ENCODE measurements at regions of chr7 and their contacts with region 1.

Region 1: GRCh38 chr7:63925623-63926460 is 72.8 kb upstream of the ZNF722 start:
- DNase-seq: peak; percentile 69 to 98 (median 95)
- ATAC-seq: peak; percentile 98
- H3K4me3 ChIP-seq: peak overlapping the region; percentile 64
- H3K4me3 Mint-ChIP-seq: peak overlapping the region; percentile 88 to 100 (median 98)
- H3K27ac ChIP-seq: peak overlapping the region; percentile 82
- H3K27ac Mint-ChIP-seq: peak overlapping the region; percentile 87 to 98 (median 95)
- H3K4me1 ChIP-seq: no peaks in the 10 kb centered on the region
- H3K4me1 Mint-ChIP-seq: peaks cover 0 to 24% (median 12%) of the 10 kb centered on the region in 7 donors
- H3K27me3 ChIP-seq: no peaks in the 10 kb centered on the region
- H3K27me3 Mint-ChIP-seq: peaks cover 0 to 4% (median 0%) of the 10 kb centered on the region in 5 donors

Region 2: DNA sequence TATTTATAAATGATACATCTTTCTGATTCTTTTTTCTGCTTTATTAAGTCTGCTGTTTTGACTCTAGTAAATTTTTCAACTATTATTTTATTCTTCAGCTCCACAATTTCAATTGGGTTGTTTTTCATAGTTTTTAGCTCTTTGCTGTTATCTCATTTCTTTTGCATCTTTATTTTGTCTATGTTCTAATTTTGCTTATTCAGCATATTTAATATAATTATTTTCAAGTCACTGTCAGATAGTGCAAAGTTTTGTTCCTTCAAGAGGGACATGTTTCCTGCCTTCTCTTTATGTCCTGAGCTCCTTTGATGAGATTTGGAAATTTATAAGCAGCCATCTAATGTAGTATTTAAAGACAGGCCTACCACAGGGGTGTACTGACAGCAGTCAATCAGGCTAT is 58.7 kb before region 1 on chr7:
- CTCF ChIA-PET with region 1: no interaction called
- POLR2A ChIA-PET with region 1: no interaction called
- intact Hi-C with region 1: no loop called
- DNase-seq: no peak
- ATAC-seq: no peak
- H3K4me3 ChIP-seq: no peak overlapping the region
- H3K4me3 Mint-ChIP-seq: no peak overlapping the region
- H3K27ac ChIP-seq: no peak overlapping the region
- H3K27ac Mint-ChIP-seq: no peak overlapping the region
- H3K4me1 ChIP-seq: no peaks in the 10 kb centered on the region
- H3K4me1 Mint-ChIP-seq: no peaks in the 10 kb centered on the region
- H3K27me3 ChIP-seq: no peaks in the 10 kb centered on the region
- H3K27me3 Mint-ChIP-seq: no peaks in the 10 kb centered on the region

Region 3: DNA sequence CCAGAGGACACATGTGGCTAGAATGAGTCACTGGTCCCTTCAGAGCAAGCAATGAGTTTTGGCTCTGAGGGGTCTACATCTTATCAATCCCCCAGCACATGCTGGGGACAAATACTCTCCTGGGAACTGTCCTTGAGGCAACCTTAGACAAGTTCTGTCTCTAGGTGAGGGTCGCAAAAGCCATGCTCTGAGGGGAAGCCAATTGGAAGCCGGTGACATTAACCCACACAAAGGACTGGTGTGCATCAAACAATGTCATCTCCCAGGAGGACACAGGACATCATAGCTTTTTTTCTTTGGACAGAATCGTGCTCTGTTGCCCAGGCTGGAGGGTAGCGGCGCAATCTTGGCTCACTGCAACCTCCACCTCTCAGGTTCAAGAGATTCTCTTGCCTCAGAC is 38.8 kb before region 1 on chr7:
- CTCF ChIA-PET with region 1: no interaction called
- POLR2A ChIA-PET with region 1: no interaction called
- intact Hi-C with region 1: no loop called
- DNase-seq: no peak
- ATAC-seq: no peak
- H3K4me3 ChIP-seq: no peak overlapping the region
- H3K4me3 Mint-ChIP-seq: no peak overlapping the region
- H3K27ac ChIP-seq: no peak overlapping the region
- H3K27ac Mint-ChIP-seq: no peak overlapping the region
- H3K4me1 ChIP-seq: no peaks in the 10 kb centered on the region
- H3K4me1 Mint-ChIP-seq: no peaks in the 10 kb centered on the region
- H3K27me3 ChIP-seq: no peaks in the 10 kb centered on the region
- H3K27me3 Mint-ChIP-seq: peaks cover 0 to 5% (median under 1%) of the 10 kb centered on the region in 5 donors

Region 4: GRCh38 chr7:63900394-63901203 is 25.2 kb before region 1 on chr7:
- CTCF ChIA-PET with region 1: interaction called, 6 read pairs
- POLR2A ChIA-PET with region 1: interaction called, 21 read pairs
- intact Hi-C with region 1: loop called (anchors 1 kb)
- DNase-seq: peak; percentile 64 to 95 (median 91)
- ATAC-seq: peak; percentile 97
- H3K4me3 ChIP-seq: peak overlapping the region; percentile 84
- H3K4me3 Mint-ChIP-seq: peak overlapping the region; percentile 82 to 100 (median 98)
- H3K27ac ChIP-seq: peak overlapping the region; percentile 89
- H3K27ac Mint-ChIP-seq: peak overlapping the region; percentile 88 to 99 (median 95)
- H3K4me1 ChIP-seq: no peaks in the 10 kb centered on the region
- H3K4me1 Mint-ChIP-seq: peaks cover 0 to 22% (median 9%) of the 10 kb centered on the region in 7 donors
- H3K27me3 ChIP-seq: no peaks in the 10 kb centered on the region
- H3K27me3 Mint-ChIP-seq: peaks cover 0 to 4% (median 0%) of the 10 kb centered on the region in 5 donors

Region 5: GRCh38 chr7:64277630-64278029 is 351.8 kb after region 1 on chr7:
- CTCF ChIA-PET with region 1: no interaction called
- POLR2A ChIA-PET with region 1: no interaction called
- intact Hi-C with region 1: no loop called
- DNase-seq: no peak
- ATAC-seq: no peak
- H3K4me3 ChIP-seq: no peak overlapping the region
- H3K4me3 Mint-ChIP-seq: no peak overlapping the region
- H3K27ac ChIP-seq: no peak overlapping the region
- H3K27ac Mint-ChIP-seq: no peak overlapping the region
- H3K4me1 ChIP-seq: no peaks in the 10 kb centered on the region
- H3K4me1 Mint-ChIP-seq: no peaks in the 10 kb centered on the region
- H3K27me3 ChIP-seq: no peaks in the 10 kb centered on the region
- H3K27me3 Mint-ChIP-seq: no peaks in the 10 kb centered on the region

Region 6: GRCh38 chr7:64307254-64308015 is 381.6 kb after region 1 on chr7:
- CTCF ChIA-PET with region 1: interaction called, 3 read pairs
- POLR2A ChIA-PET with region 1: interaction called, 10 read pairs
- intact Hi-C with region 1: loop called (anchors 1 kb)
- DNase-seq: peak; percentile 76 to 95 (median 93)
- ATAC-seq: peak; percentile 99
- H3K4me3 ChIP-seq: peak overlapping the region; percentile 95
- H3K4me3 Mint-ChIP-seq: peak overlapping the region; percentile 90 to 100 (median 96)
- H3K27ac ChIP-seq: peak overlapping the region; percentile 83
- H3K27ac Mint-ChIP-seq: peak overlapping the region; percentile 94 to 99 (median 97)
- H3K4me1 ChIP-seq: peaks cover 0 to 13% of the 10 kb centered on the region in 2 donors
- H3K4me1 Mint-ChIP-seq: peaks cover 13 to 30% (median 19%) of the 10 kb centered on the region in 7 donors
- H3K27me3 ChIP-seq: no peaks in the 10 kb centered on the region
- H3K27me3 Mint-ChIP-seq: no peaks in the 10 kb centered on the region

Region 7: GRCh38 chr7:64313740-64314491 is 388.1 kb after region 1 on chr7 and contains the start of gene ZNF736:
- CTCF ChIA-PET with region 1: no interaction called
- POLR2A ChIA-PET with region 1: interaction called, 3 read pairs
- intact Hi-C with region 1: loop called (anchors 1 kb)
- DNase-seq: peak; percentile 64 to 92 (median 87)
- ATAC-seq: peak; percentile 100
- H3K4me3 ChIP-seq: peak within 1 kb of the TSS; percentile 81
- H3K4me3 Mint-ChIP-seq: peak within 1 kb of the TSS; percentile 90 to 100 (median 98)
- H3K27ac ChIP-seq: peak within 1 kb of the TSS; percentile 88
- H3K27ac Mint-ChIP-seq: peak within 1 kb of the TSS; percentile 88 to 100 (median 97)
- H3K4me1 ChIP-seq: peaks cover 8 to 12% of the 10 kb centered on the region in 2 donors
- H3K4me1 Mint-ChIP-seq: peaks cover 22 to 54% (median 39%) of the 10 kb centered on the region in 7 donors
- H3K27me3 ChIP-seq: no peaks in the 10 kb centered on the region
- H3K27me3 Mint-ChIP-seq: no peaks in the 10 kb centered on the region
- total RNA-seq, gene ZNF736: 22.8 to 54.2 (median 35.8) TPM

Region 8: DNA sequence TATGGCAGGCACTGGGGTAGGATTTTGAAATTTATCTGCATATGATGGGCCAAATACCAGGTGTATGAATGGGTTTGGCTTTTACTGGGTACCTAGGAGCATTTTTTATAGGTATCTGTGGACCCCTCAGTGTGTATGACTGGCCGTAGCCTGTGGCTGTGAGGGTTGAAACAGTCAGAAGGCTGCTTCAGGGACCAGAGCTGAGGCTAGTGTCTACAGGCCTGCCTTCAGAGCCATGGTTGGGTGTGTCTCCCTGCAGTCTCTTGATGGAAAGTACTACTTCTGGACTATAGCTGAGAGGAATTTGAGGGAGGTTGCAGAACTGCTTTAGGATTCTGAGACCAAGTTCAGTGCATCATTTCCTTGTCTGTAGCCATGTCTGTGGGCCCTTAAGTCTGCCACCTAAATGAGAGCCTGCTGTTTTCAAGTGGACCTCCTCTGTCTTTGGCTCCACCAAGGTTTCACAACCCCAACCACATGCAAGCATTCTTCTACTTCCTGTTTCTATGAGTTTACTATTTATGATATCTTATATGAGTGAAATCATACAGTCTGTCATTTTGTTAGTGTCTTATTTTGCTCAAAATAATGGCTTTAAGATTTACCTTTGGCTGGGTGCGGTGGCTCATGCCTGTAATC is 848.5 kb after region 1 on chr7:
- CTCF ChIA-PET with region 1: no interaction called
- POLR2A ChIA-PET with region 1: no interaction called
- intact Hi-C with region 1: no loop called
- DNase-seq: no peak
- ATAC-seq: peak; percentile 47
- H3K4me3 ChIP-seq: no peak overlapping the region
- H3K4me3 Mint-ChIP-seq: no peak overlapping the region
- H3K27ac ChIP-seq: no peak overlapping the region
- H3K27ac Mint-ChIP-seq: no peak overlapping the region
- H3K4me1 ChIP-seq: no peaks in the 10 kb centered on the region
- H3K4me1 Mint-ChIP-seq: no peaks in the 10 kb centered on the region
- H3K27me3 ChIP-seq: no peaks in the 10 kb centered on the region
- H3K27me3 Mint-ChIP-seq: peaks cover 0 to 5% (median 3%) of the 10 kb centered on the region in 5 donors

Region 9: GRCh38 chr7:65006094-65006992 is 1080.5 kb after region 1 on chr7 and contains the start of gene ERV3-1:
- CTCF ChIA-PET with region 1: no interaction called
- POLR2A ChIA-PET with region 1: interaction called, 9 read pairs
- intact Hi-C with region 1: loop called in 1 of 2 experiments (anchors 1 kb)
- DNase-seq: peak; percentile 76 to 96 (median 93)
- ATAC-seq: peak; percentile 99
- H3K4me3 ChIP-seq: peak within 1 kb of the TSS; percentile 72
- H3K4me3 Mint-ChIP-seq: peak within 1 kb of the TSS; percentile 75 to 96 (median 94)
- H3K27ac ChIP-seq: peak within 1 kb of the TSS; percentile 81
- H3K27ac Mint-ChIP-seq: peak within 1 kb of the TSS; percentile 73 to 98 (median 94)
- H3K4me1 ChIP-seq: peaks cover 4 to 21% of the 10 kb centered on the region in 2 donors
- H3K4me1 Mint-ChIP-seq: peaks cover 26 to 57% (median 45%) of the 10 kb centered on the region in 7 donors
- H3K27me3 ChIP-seq: no peaks in the 10 kb centered on the region
- H3K27me3 Mint-ChIP-seq: no peaks in the 10 kb centered on the region
- total RNA-seq, gene ERV3-1: 12.2 to 22.9 (median 14.9) TPM

Region 10: GRCh38 chr7:65373608-65374351 is 1447.9 kb after region 1 on chr7 and contains the start of gene ZNF92:
- CTCF ChIA-PET with region 1: no interaction called
- POLR2A ChIA-PET with region 1: interaction called, 4 read pairs
- intact Hi-C with region 1: loop called in 1 of 2 experiments (anchors 2 kb)
- DNase-seq: peak; percentile 84 to 95 (median 94)
- ATAC-seq: peak; percentile 99
- H3K4me3 ChIP-seq: peak within 1 kb of the TSS; percentile 87
- H3K4me3 Mint-ChIP-seq: peak within 1 kb of the TSS; percentile 90 to 98 (median 96)
- H3K27ac ChIP-seq: peak within 1 kb of the TSS; percentile 82
- H3K27ac Mint-ChIP-seq: peak within 1 kb of the TSS; percentile 87 to 96 (median 93)
- H3K4me1 ChIP-seq: peaks cover 8 to 21% of the 10 kb centered on the region in 2 donors
- H3K4me1 Mint-ChIP-seq: peaks cover 18 to 57% (median 49%) of the 10 kb centered on the region in 7 donors
- H3K27me3 ChIP-seq: no peaks in the 10 kb centered on the region
- H3K27me3 Mint-ChIP-seq: no peaks in the 10 kb centered on the region
- total RNA-seq, gene ZNF92: 16.3 to 22.5 (median 19.3) TPM